ENCODE measurements at regions of chr5 and their contacts with region 1.

Region 1: DNA sequence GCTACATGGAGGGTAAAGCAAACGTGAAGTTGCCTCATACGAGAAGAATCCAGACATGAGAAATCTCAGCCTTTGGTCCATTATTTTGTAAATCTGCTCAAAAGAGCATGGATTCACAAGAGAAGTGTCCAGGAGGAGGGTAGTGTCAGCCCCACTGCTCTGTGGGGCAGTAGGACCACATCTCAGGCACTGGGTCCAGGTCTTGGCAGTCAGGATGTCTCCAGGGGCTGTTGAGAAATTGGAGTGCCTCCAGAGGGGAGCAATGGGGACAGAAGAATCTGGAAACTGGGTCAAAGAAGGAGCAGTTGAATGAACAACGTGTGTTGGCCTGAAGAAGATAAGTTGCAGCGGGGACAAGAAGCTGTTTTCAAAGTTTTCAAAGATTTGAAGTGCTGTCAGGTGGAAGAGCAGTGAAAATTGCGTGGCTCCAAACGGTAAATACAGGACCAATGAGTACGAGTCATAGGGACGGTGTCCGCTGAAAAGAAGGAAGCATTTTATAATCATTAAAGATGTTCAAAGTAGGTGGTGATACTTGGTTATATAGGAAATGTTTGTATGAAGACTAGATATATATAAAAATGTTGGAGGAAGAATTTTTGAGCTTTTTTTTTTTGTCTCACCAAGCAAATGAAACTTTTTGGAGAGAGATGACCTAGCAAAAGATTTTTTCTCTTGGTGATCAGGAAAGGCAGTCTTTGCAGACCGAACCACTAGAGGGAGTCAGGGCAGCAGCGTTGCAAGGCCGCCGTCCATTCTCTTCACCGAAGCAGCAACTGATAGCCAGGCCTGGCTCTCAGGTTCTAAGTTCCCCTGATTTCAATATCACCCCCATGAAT is 57.1 kb upstream of the ZBED3 start:
- DNase-seq: no peak
- H3K4me3 ChIP-seq: no peak overlapping the region
- H3K27ac ChIP-seq: no peak overlapping the region
- H3K4me1 ChIP-seq: peaks cover 0 to 4% (median 0%) of the 10 kb centered on the region in 4 donors
- H3K27me3 ChIP-seq: no peaks in the 10 kb centered on the region
- CTCF ChIP-seq: peak; percentile 67 to 88 (median 76)
- EP300 ChIP-seq: no peak
- POLR2A ChIP-seq: no peak

Region 2: GRCh38 chr5:76724871-76725270 is 419.3 kb before region 1 on chr5:
- intact Hi-C with region 1: no loop called
- DNase-seq: no peak
- H3K4me3 ChIP-seq: no peak overlapping the region
- H3K27ac ChIP-seq: no peak overlapping the region
- H3K4me1 ChIP-seq: peaks cover 0 to 8% (median 2%) of the 10 kb centered on the region in 4 donors
- H3K27me3 ChIP-seq: peaks cover 0 to under 1% (median 0%) of the 10 kb centered on the region in 4 donors
- CTCF ChIP-seq: no peak
- EP300 ChIP-seq: no peak
- POLR2A ChIP-seq: no peak

Region 3: DNA sequence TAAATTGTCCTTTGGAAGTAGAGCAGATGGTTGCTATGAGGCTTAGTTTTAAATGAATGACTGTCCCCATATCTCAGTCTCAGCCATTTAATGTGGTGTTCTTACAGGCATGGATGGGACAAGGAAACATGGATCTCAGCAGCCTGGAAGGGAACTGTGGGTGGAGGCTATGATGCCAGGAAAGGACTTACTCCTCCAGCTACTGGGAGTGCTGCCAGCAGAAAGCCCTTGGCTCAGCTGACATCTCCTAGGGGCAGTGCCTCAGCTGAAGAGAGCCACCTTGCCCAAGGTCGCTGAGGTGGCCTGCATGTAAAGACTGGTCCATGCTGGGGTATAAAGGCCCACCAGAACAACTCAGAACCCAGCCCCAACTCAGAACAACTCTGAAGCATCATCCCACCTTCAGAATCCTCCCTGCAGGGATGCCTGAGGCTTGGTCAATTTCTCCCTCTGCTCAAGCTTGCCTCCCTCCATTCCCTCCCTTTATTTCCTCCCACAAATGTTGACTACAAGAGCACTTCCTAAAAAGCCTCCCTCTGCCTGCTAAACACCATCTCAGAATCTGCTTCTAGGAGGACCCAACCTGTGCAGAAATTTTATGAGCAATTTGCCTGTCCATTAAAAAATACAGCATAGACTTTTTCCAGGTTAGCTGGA is 64.4 kb after region 1 on chr5:
- intact Hi-C with region 1: loop called (anchors 2 kb)
- DNase-seq: no peak
- H3K4me3 ChIP-seq: no peak overlapping the region
- H3K27ac ChIP-seq: no peak overlapping the region
- H3K4me1 ChIP-seq: peaks cover 7 to 25% (median 16%) of the 10 kb centered on the region in 4 donors
- H3K27me3 ChIP-seq: peaks cover 0 to 36% (median 8%) of the 10 kb centered on the region in 4 donors
- CTCF ChIP-seq: no peak
- EP300 ChIP-seq: no peak
- POLR2A ChIP-seq: no peak

Region 4: DNA sequence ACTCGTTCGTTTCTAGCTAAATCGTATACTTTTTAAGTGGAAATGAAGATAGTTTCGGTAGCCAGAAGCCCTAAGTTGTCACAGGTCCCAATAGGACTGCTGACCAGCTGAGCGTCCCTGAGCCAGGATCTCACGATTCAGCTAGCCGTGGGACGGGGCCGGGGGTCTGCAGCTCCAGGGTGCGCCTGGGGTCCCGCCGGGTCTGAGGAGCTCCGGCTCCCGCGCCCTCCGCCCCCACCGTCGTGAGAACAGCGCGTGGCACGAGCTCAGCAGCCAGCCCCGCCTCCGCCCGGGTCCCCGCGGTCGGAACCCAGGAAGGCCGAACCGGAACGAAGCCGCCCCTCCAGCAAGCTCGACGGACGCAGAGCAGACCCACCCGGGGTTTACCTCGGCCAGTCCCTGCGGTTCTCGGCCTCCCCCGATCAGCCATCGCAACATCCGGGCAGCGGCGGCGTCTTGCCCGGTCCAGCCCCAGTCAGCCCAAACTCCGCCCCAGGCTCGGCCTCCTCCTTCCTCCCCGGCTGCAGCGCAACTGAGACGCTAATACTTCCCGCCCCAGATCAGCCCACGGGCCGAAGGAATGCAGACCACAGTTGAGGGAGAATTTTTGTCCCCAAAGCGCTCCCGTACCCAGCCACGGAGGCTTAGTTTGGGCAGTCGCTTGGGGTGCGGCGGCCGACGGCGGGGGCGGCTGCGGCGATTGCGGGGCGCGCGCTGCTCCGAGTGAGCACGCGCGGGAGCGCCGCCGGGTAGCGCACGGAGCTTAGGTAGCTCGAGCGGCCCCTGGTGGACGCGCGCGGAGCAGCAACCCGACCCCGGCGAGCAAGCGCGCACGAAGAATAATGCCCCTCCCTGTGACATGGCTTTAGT is 347.8 kb after region 1 on chr5 and contains the start of gene WDR41:
- intact Hi-C with region 1: loop called (anchors 5 kb)
- DNase-seq: peak; percentile 98
- H3K4me3 ChIP-seq: peak within 1 kb of the TSS; percentile 73 to 93 (median 82)
- H3K27ac ChIP-seq: peak within 1 kb of the TSS; percentile 93 to 97 (median 94)
- H3K4me1 ChIP-seq: peaks cover 3 to 18% (median 17%) of the 10 kb centered on the region in 4 donors
- H3K27me3 ChIP-seq: peaks cover 0 to 4% (median 0%) of the 10 kb centered on the region in 4 donors
- CTCF ChIP-seq: peak in 2 of 3 experiments; percentile 88 to 99
- EP300 ChIP-seq: no peak
- POLR2A ChIP-seq: no peak
- total RNA-seq, gene WDR41: 18.8 to 56.1 (median 33.2) TPM